CD4-positive, alpha-beta T cell (primary cell): ENCODE measurements at regions of chr1 and their contacts with region 1.

Region 1: DNA sequence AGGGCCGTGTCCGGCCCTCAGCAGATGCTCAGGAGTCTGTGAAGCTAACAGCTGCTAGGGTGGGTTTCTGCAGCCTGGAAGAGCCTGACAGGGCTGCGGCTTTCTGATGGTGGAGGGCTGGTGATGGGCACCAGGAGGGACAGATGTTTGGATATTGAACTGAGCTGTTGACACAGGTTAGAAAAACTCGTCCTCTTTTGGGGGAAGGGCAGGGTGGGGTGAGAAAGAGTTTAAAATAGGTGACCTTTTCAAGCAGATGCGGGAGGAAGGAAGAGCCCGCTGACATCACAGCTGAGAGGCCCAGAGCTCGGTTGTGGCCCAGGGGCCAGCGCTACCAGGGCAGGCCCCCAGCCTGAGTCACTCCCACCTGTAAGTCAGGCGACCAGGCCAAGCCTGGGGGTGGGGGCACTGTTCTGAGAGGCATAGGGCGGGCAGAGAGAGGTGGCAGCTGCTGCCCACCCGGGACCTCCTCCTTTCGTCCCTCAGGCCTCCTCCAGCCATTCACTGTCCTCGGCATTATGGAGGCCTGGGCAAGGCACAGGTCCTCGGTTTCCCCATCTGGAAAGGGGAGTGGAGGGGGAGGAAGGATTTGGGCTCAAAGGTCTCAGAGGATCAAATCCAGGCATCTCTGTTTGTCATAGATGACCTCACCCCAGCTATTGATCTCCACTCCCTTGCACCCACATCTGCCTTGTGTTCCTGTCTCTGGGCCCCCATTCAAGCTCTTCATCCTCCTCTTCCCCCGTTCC is 32.3 kb upstream of the ID3 start:
- DNase-seq: peak in 3 of 14 experiments; percentile 24 to 63 (median 53)
- ATAC-seq: peak; percentile 23
- H3K4me3 ChIP-seq: no peak overlapping the region
- H3K4me3 Mint-ChIP-seq: peak overlapping the region; percentile 44
- H3K27ac ChIP-seq: peak overlapping the region in 1 of 2 donors; percentile 28
- H3K27ac Mint-ChIP-seq: peak overlapping the region; percentile 78
- H3K4me1 ChIP-seq: peaks cover 63% of the 10 kb centered on the region
- H3K4me1 Mint-ChIP-seq: peaks cover 65% of the 10 kb centered on the region
- H3K27me3 ChIP-seq: no peaks in the 10 kb centered on the region
- H3K27me3 Mint-ChIP-seq: no peaks in the 10 kb centered on the region
- CTCF ChIP-seq: no peak

Region 2: GRCh38 chr1:23619299-23620188 is 27.9 kb after region 1 on chr1:
- CTCF ChIA-PET with region 1: no interaction called
- POLR2A ChIA-PET with region 1: interaction called, 176 read pairs
- intact Hi-C with region 1: no loop called
- DNase-seq: peak; percentile 75 to 96 (median 89)
- ATAC-seq: peak; percentile 87
- H3K4me3 ChIP-seq: peak overlapping the region; percentile 62
- H3K4me3 Mint-ChIP-seq: peak overlapping the region; percentile 78
- H3K27ac ChIP-seq: peak overlapping the region; percentile 77 to 82
- H3K27ac Mint-ChIP-seq: peak overlapping the region; percentile 97
- H3K4me1 ChIP-seq: peaks cover 88% of the 10 kb centered on the region
- H3K4me1 Mint-ChIP-seq: peaks cover 94% of the 10 kb centered on the region
- H3K27me3 ChIP-seq: no peaks in the 10 kb centered on the region
- H3K27me3 Mint-ChIP-seq: no peaks in the 10 kb centered on the region
- CTCF ChIP-seq: no peak

Region 3: GRCh38 chr1:23673086-23673813 is 81.6 kb after region 1 on chr1:
- CTCF ChIA-PET with region 1: no interaction called
- POLR2A ChIA-PET with region 1: no interaction called
- intact Hi-C with region 1: no loop called
- DNase-seq: no peak
- ATAC-seq: no peak
- H3K4me3 ChIP-seq: no peak overlapping the region
- H3K4me3 Mint-ChIP-seq: no peak overlapping the region
- H3K27ac ChIP-seq: no peak overlapping the region
- H3K27ac Mint-ChIP-seq: no peak overlapping the region
- H3K4me1 ChIP-seq: no peaks in the 10 kb centered on the region
- H3K4me1 Mint-ChIP-seq: no peaks in the 10 kb centered on the region
- H3K27me3 ChIP-seq: no peaks in the 10 kb centered on the region
- H3K27me3 Mint-ChIP-seq: peaks cover under 1% of the 10 kb centered on the region
- CTCF ChIP-seq: no peak